BJ (cell line): ENCODE measurements at regions of chr10 and their contacts with region 1.

Region 1: GRCh38 chr10:45224219-45224841 is 91.1 kb downstream of the OR13A1 start:
- DNase-seq: no peak
- H3K4me3 ChIP-seq: no peak overlapping the region
- H3K27me3 ChIP-seq: no peaks in the 10 kb centered on the region
- CTCF ChIP-seq: no peak

Region 2: GRCh38 chr10:44864637-44865288 is 359.6 kb before region 1 on chr10:
- CTCF ChIA-PET with region 1: no interaction called
- POLR2A ChIA-PET with region 1: no interaction called
- DNase-seq: no peak
- H3K4me3 ChIP-seq: peak overlapping the region; percentile 57
- H3K27me3 ChIP-seq: no peaks in the 10 kb centered on the region
- CTCF ChIP-seq: peak; percentile 94

Region 3: GRCh38 chr10:45204954-45205775 is 19.2 kb before region 1 on chr10:
- CTCF ChIA-PET with region 1: no interaction called
- POLR2A ChIA-PET with region 1: no interaction called
- DNase-seq: no peak
- H3K4me3 ChIP-seq: no peak overlapping the region
- H3K27me3 ChIP-seq: no peaks in the 10 kb centered on the region
- CTCF ChIP-seq: no peak

Region 4: DNA sequence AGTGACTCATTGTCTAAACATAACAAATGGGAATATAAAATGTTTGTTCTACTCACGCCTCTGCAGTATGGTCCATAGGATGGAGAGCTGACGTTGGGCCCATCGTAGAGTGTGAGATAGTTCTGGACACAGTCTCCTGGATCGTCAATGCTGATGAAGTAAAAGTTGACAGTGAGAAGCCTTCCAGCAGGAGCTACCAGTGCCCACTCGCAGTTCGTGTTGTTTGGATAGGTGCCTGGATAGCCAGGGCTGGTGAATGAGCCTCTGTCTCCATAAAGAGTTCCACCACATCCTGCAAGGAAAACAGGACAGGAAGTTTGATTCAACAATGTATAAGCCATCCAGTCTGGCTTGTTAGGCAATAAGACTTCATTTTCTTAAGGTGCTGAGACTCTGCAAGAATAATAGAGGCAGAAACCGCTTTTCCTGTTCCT is 11.5 kb after region 1 on chr10:
- CTCF ChIA-PET with region 1: interaction called, 12 read pairs
- POLR2A ChIA-PET with region 1: no interaction called
- DNase-seq: no peak
- H3K4me3 ChIP-seq: no peak overlapping the region
- H3K27me3 ChIP-seq: no peaks in the 10 kb centered on the region
- CTCF ChIP-seq: no peak

Region 5: DNA sequence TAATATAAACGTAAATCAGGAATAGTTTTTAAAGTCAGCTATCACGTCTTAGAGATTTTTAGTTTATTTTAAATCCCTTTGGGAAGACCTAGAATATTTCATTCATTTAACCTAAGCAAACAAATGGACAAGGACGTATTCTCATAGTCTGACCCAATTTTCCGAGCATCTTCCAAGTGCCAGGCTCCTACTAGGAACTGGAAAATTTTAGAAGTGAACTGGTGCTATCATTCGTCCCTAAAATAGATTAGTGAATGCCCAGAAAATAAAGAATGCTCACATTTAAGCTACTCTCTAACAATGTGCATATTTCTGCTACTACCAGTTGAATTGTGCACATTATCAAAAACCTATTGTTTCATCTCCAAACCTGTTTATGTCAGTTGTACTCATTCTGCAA is 328.1 kb after region 1 on chr10:
- CTCF ChIA-PET with region 1: no interaction called
- POLR2A ChIA-PET with region 1: interaction called, 10 read pairs
- DNase-seq: no peak
- H3K4me3 ChIP-seq: no peak overlapping the region
- H3K27me3 ChIP-seq: no peaks in the 10 kb centered on the region
- CTCF ChIP-seq: no peak